ENCODE measurements at regions of chr4 and their contacts with region 1.

Region 1: DNA sequence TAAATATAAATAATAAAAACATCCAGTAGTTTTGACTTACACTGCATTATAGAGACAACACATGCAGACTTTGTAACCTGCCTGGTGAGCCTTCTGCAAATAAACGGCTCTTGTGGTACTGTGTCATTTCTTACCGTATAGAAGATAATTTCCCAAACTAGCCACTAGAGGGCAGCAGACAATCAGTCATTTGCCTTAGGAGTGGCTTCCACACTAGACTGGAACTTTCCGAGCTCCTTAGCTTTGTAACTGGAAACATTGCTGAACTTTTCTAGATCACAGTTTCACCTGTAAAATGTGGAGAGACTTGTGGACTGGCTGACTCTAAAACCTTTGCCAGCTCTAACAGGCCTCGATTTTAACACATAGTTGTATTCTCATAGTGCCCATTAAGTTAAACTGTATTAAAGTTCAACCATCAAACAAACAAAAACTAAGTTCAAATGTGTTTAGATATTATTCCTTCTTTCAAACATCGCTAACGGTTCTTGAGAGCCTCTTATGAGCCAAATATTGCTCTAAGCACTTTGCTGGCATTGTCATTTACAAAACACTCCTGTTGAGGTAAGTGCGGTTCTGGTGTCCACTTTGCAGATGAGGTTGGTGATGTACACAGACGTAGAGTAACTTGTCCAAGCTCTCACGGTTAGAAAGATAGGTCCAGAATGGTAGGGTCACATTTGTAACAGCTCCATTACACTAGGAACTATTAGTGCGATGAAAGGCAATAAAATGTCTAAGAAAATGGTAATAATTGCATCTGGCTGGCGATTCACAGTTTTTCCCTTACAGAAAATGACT is 345.5 kb downstream of the ANK2 start:
- DNase-seq: peak; percentile 85
- H3K4me3 ChIP-seq: no peak overlapping the region
- H3K27ac ChIP-seq: no peak overlapping the region
- H3K4me1 ChIP-seq: no peaks in the 10 kb centered on the region
- H3K27me3 ChIP-seq: no peaks in the 10 kb centered on the region
- CTCF ChIP-seq: peak; percentile 77 to 97 (median 91)
- POLR2A ChIP-seq: peak; percentile 13

Region 2: DNA sequence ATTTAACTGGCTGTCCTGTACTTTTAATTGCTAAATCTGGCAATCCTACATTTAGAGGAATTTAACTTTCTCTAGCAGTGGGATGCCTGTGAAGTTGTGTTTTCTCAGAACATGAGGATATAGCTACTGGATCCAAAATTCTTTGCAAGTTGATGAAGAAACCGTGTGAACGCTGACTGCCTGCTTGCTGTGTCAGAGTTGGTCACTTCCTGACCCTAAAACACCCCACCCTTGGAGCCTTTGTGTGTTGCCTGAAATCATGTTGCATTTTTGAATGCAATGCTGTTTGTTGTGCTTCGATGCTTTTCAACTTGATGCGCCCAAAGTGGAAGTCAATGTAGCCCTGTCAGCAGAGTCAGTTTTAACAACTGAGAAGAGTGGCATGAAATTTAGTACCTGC is 134.2 kb before region 1 on chr4:
- intact Hi-C with region 1: no loop called
- DNase-seq: no peak
- H3K4me3 ChIP-seq: no peak overlapping the region
- H3K27ac ChIP-seq: no peak overlapping the region
- H3K4me1 ChIP-seq: no peaks in the 10 kb centered on the region
- H3K27me3 ChIP-seq: no peaks in the 10 kb centered on the region
- CTCF ChIP-seq: no peak
- POLR2A ChIP-seq: no peak

Region 3: GRCh38 chr4:113547487-113548042 is 152.6 kb after region 1 on chr4:
- intact Hi-C with region 1: loop called (anchors 10 kb)
- DNase-seq: peak; percentile 83
- H3K4me3 ChIP-seq: no peak overlapping the region
- H3K27ac ChIP-seq: peak overlapping the region; percentile 32 to 35
- H3K4me1 ChIP-seq: no peaks in the 10 kb centered on the region
- H3K27me3 ChIP-seq: no peaks in the 10 kb centered on the region
- CTCF ChIP-seq: peak; percentile 95 to 99 (median 96)
- POLR2A ChIP-seq: no peak

Region 4: GRCh38 chr4:114281164-114281960 is 886.4 kb after region 1 on chr4:
- intact Hi-C with region 1: no loop called
- DNase-seq: no peak
- H3K4me3 ChIP-seq: no peak overlapping the region
- H3K27ac ChIP-seq: no peak overlapping the region
- H3K4me1 ChIP-seq: no peaks in the 10 kb centered on the region
- H3K27me3 ChIP-seq: no peaks in the 10 kb centered on the region
- CTCF ChIP-seq: no peak
- POLR2A ChIP-seq: no peak

Region 5: GRCh38 chr4:114378306-114378903 is 983.5 kb after region 1 on chr4:
- intact Hi-C with region 1: loop called (anchors 10 kb)
- DNase-seq: peak; percentile 22
- H3K4me3 ChIP-seq: no peak overlapping the region
- H3K27ac ChIP-seq: no peak overlapping the region
- H3K4me1 ChIP-seq: no peaks in the 10 kb centered on the region
- H3K27me3 ChIP-seq: no peaks in the 10 kb centered on the region
- CTCF ChIP-seq: peak in 2 of 4 experiments; percentile 51 to 54
- POLR2A ChIP-seq: no peak

Measured in prostate gland (tissue), 2 donors.